Caco-2 (cell line): ENCODE measurements at regions of chr11 and their contacts with region 1.

Region 1: DNA sequence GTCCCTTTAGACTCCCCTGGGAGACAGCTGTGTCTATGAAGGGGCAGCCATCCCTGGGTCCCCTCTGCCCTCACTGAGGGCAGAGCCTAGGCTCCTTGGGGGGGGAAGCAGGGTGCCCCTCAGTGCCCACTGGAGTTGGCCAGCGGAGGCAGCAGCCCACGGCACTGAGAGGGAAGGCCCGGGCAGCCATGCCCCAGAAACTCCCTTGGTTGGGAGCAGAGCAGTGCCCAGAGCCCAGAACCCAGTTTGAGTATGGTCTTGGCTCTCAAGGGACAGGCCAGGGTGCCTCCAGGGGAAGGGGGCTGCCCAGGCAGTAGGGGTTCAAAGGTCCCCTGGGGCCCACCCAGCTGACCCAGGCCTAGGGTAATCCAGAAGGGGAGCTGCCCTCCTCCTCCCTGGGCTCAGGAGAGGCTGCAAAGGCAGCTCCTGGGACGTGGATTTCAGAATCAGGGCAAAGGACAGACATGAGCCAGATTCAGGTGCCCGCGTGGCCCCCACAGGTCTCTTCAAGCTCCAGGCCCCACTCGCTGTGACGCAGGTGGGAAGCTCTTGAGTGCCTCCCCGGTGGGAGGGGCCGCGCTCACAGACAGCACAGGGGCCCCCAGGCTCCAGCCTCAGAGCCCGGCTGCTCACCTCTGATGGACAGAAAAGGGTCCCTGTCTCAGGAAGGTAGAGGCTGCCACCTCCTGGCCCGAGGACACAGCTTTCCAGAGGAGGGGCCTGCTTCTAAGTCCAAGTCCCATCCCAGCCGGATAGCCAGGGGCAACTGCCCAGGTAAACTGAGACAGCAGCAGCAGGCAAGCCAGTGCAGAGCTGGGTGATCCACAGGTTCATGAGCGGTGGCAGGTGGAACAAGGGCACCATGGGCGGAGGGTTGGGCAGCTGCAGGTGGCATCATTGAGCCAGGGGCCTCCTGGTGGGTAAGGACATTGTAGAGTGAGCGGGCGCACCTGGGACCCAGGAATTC is 2.6 kb downstream of the C11orf21 start:
- DNase-seq: peak; percentile 85 to 89
- H3K4me3 ChIP-seq: no peak overlapping the region
- H3K4me3 Mint-ChIP-seq: no peak overlapping the region
- H3K27ac Mint-ChIP-seq: peak overlapping the region; percentile 60
- H3K4me1 ChIP-seq: peaks cover 37% of the 10 kb centered on the region
- H3K4me1 Mint-ChIP-seq: peaks cover 7% of the 10 kb centered on the region
- H3K27me3 ChIP-seq: no peaks in the 10 kb centered on the region
- H3K27me3 Mint-ChIP-seq: no peaks in the 10 kb centered on the region
- CTCF ChIP-seq: peak; percentile 35 to 85

Region 2: DNA sequence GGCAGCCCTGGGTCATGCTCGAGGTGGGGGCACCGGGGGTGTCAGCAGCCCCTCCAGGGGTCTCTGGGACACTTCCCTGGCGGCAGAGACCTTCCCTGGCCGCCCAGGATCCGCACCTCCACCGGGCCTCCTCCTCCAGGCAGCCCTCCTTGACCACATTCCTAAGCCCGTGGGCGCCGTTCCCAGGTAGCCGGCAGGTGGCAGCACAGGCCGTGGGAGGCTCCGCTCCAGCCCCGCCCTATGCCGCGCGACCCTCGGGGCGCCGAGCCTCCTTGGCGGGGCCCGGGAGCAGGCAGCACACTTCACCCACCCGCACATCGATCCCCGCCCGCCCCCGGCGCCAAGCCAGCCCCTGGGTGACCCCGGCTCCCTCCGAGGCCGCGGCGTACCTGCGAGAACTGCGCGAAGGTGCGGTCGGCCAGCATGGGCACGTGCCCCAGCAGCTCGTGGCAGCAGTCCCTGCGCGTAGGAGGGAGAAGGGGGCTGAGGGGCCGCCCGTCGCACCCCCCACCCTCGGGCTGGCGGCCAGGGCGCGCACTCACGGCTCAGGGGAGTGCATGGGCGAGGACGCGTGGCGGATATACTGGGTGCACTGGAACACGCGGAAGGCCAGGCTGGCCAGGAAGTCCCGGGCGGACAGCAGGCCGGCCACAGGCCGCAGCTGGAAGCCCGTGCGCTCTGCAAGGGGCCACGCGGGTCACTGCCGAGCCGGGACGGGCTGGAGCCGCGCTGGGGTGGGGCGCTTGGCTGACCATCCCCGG is 132.8 kb before region 1 on chr11:
- CTCF ChIA-PET with region 1: interaction called, 4 read pairs
- POLR2A ChIA-PET with region 1: no interaction called
- intact Hi-C with region 1: loop called (anchors 1 kb)
- DNase-seq: peak in 1 of 2 experiments; percentile 71
- H3K4me3 ChIP-seq: no peak overlapping the region
- H3K4me3 Mint-ChIP-seq: no peak overlapping the region
- H3K27ac Mint-ChIP-seq: no peak overlapping the region
- H3K4me1 ChIP-seq: peaks cover 12% of the 10 kb centered on the region
- H3K4me1 Mint-ChIP-seq: no peaks in the 10 kb centered on the region
- H3K27me3 ChIP-seq: no peaks in the 10 kb centered on the region
- H3K27me3 Mint-ChIP-seq: no peaks in the 10 kb centered on the region
- CTCF ChIP-seq: peak; percentile 62 to 84

Region 3: DNA sequence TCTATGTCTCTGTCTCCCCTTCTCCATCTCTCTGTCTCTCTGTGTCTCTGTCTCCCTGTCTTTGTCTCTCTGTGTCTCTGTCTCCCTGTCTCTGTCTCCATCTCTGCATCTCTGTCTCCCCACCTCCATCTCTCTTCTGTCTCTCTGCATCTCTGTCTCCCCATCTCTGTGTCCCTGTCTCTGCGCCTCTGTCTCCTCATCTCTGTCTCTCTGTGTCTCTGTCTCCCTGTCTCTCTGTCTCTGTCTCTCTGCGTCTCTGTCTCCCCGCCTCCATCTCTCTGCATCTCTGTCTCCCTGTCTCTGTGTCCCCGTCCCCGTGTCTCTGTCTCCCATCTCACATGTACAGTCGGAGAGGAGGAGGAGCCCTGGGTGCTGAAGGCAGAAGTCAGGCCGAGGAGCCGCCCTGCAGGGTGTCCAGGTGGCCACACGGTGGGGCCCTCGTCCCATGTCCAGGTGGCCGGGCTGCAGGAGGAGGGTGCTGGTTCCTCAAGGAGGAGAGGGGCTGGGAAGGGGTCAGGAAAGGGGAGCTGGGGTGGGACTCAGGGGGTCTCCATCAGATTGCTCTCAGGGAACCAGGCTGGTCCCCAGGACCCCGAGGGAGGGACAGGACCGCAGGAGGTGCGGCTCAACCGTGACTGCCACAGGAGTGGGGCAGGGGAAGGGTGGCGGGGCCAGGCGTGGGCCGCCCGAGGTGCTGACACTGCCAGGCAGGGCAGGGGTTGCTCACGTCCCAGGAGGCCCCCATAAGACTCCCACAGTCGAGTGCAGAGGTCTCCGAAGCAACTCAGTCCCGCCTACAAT is 101.9 kb before region 1 on chr11:
- CTCF ChIA-PET with region 1: interaction called, 46 read pairs
- POLR2A ChIA-PET with region 1: interaction called, 4 read pairs
- intact Hi-C with region 1: loop called (anchors 1 kb)
- DNase-seq: peak; percentile 92 to 97
- H3K4me3 ChIP-seq: no peak overlapping the region
- H3K4me3 Mint-ChIP-seq: no peak overlapping the region
- H3K27ac Mint-ChIP-seq: peak overlapping the region; percentile 51
- H3K4me1 ChIP-seq: peaks cover 37% of the 10 kb centered on the region
- H3K4me1 Mint-ChIP-seq: peaks cover 31% of the 10 kb centered on the region
- H3K27me3 ChIP-seq: no peaks in the 10 kb centered on the region
- H3K27me3 Mint-ChIP-seq: peaks cover 7% of the 10 kb centered on the region
- CTCF ChIP-seq: peak; percentile 98 to 99

Region 4: DNA sequence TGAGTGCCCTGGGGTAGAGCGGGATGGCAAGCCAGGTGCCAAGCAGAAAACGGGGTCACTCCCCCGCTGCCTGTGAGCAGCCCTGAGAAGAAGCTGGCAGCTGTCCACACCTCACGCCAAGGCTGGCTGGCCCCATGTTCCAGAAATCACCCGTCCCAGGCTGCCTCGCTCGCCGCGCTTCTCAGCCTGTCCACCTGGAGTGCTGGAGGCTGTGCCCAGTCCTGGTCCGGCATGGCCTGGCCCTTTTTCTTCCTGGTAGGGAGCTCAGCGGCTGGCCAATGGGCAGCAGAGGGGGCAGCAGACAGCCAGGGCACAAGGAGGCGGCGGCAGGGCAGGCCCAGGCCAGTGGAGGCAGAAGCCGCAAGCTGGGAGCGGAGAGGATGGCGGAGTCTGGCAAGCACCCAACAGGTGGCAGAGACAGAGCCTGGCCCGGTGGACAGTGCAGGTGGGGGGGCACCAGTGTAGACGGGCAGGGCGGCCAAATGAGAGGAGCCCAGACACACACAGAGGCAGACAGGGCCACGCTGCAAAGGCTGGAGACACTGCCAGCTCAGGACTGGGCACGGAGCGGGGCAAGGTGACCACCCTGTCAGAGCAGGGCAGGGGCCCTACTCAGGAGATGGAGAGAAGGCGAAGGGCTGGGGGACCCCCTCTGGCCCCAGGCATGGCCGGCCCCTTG is 90.2 kb before region 1 on chr11:
- CTCF ChIA-PET with region 1: interaction called, 21 read pairs
- POLR2A ChIA-PET with region 1: no interaction called
- intact Hi-C with region 1: no loop called
- DNase-seq: peak; percentile 58 to 65
- H3K4me3 ChIP-seq: no peak overlapping the region
- H3K4me3 Mint-ChIP-seq: peak overlapping the region; percentile 6
- H3K27ac Mint-ChIP-seq: peak overlapping the region; percentile 75
- H3K4me1 ChIP-seq: peaks cover 82% of the 10 kb centered on the region
- H3K4me1 Mint-ChIP-seq: peaks cover 58% of the 10 kb centered on the region
- H3K27me3 ChIP-seq: no peaks in the 10 kb centered on the region
- H3K27me3 Mint-ChIP-seq: no peaks in the 10 kb centered on the region
- CTCF ChIP-seq: peak in 1 of 2 experiments; percentile 41

Region 5: GRCh38 chr11:2269601-2270321 is 29.3 kb before region 1 on chr11:
- CTCF ChIA-PET with region 1: interaction called, 13 read pairs
- POLR2A ChIA-PET with region 1: interaction called, 5 read pairs
- intact Hi-C with region 1: loop called (anchors 2 kb)
- DNase-seq: peak; percentile 85 to 87
- H3K4me3 ChIP-seq: peak overlapping the region; percentile 76
- H3K4me3 Mint-ChIP-seq: peak overlapping the region; percentile 87
- H3K27ac Mint-ChIP-seq: peak overlapping the region; percentile 88
- H3K4me1 ChIP-seq: peaks cover 27% of the 10 kb centered on the region
- H3K4me1 Mint-ChIP-seq: peaks cover 10% of the 10 kb centered on the region
- H3K27me3 ChIP-seq: no peaks in the 10 kb centered on the region
- H3K27me3 Mint-ChIP-seq: no peaks in the 10 kb centered on the region
- CTCF ChIP-seq: peak in 1 of 2 experiments; percentile 72

Region 6: DNA sequence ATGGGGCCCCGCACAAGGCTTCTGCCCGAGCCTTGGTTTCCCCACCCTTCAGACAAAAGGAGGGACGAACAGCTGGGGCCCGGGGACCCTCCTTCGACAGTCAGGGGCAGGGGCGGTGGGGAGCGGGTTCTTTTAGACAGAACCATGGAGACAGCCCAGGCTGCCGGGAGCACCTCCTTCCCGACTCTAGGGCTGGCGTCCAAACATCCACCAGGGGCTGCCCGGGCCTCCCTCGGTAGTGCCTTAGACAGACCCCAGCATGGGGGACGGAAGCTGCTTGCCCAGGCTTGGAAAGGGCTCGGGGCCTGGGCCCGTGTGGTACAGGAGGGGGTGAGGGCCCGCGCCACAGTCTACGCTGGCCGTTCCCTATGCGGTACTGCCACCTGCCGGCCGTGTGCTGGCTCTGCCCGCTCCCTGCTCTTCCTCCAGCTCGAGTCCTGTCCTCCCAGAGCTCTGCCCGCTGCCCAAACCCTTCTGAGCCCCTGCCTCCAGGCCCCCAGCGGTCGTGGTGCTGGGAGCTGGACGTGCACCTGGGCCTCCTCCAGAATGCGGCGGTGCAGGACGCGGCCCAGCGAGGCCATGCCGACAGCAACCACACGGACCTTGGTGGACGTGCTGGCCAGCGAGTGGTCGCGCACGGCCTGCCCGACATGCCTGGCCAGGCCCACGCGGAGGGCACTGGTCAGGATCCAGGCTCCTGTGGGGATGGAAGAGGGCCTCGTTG is 121.6 kb after region 1 on chr11:
- CTCF ChIA-PET with region 1: interaction called, 128 read pairs
- POLR2A ChIA-PET with region 1: no interaction called
- intact Hi-C with region 1: no loop called
- DNase-seq: peak; percentile 65 to 82
- H3K4me3 ChIP-seq: no peak overlapping the region
- H3K4me3 Mint-ChIP-seq: no peak overlapping the region
- H3K27ac Mint-ChIP-seq: no peak overlapping the region
- H3K4me1 ChIP-seq: peaks cover 4% of the 10 kb centered on the region
- H3K4me1 Mint-ChIP-seq: no peaks in the 10 kb centered on the region
- H3K27me3 ChIP-seq: no peaks in the 10 kb centered on the region
- H3K27me3 Mint-ChIP-seq: no peaks in the 10 kb centered on the region
- CTCF ChIP-seq: peak; percentile 91 to 96